K562 (cell line): ENCODE measurements at regions of chr4 and their contacts with region 1.

Region 1: DNA sequence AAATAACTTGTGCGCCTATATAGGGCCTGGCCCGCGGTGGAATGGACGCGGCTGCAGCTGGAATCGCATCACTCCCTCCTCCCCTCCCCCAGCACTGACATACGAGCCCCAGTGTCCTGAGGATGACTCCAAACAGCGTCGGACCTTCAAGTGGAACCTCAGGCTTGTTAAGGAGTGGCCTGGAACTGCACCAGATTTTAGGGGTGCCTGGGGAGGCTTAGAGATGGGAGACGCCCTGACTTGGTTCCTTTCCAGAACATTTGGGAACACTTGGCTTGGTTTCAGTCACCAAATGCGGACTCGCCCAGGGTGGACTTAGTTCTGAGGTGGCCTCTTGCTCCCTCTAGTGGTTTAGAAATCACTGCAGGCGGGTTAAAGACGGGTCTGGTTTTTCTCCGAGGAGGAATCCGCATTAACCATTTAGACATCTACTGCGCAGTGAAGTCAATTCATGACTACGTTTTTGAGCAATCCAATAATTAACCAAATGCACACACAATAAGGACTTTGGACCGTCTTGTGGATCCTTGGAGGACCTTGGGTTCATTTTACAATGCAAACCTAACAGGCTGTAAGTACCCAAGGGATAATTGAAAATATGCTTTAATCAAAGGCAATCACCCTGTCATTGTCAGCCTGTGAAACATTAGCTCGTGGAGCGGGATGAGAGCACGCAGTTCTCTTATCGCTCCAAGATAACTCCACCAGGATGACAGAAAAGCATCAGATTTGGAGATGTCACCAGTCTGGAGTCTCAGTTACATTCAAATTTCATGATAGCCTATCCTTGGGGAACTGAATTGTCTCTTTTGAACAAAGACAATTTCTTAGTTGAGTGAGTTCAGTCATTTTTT is 11.2 kb upstream of the PDGFRA start:
- DNase-seq: peak; percentile 73 to 80 (median 78)
- ATAC-seq: peak; percentile 98
- H3K4me3 ChIP-seq: no peak overlapping the region
- H3K27ac ChIP-seq: no peak overlapping the region
- H3K4me1 ChIP-seq: no peaks in the 10 kb centered on the region; a peak in 1 of 5 replicates
- H3K27me3 ChIP-seq: peaks cover 3 to 4% of the 10 kb centered on the region in 2 experiments; a peak in 3 of 5 replicates
- CTCF ChIP-seq: peak; percentile 79 to 89 (median 86)
- EP300 ChIP-seq: no peak
- POLR2A ChIP-seq: no peak
- RAD21 ChIP-seq: peak; percentile 84 to 87

Region 2: DNA sequence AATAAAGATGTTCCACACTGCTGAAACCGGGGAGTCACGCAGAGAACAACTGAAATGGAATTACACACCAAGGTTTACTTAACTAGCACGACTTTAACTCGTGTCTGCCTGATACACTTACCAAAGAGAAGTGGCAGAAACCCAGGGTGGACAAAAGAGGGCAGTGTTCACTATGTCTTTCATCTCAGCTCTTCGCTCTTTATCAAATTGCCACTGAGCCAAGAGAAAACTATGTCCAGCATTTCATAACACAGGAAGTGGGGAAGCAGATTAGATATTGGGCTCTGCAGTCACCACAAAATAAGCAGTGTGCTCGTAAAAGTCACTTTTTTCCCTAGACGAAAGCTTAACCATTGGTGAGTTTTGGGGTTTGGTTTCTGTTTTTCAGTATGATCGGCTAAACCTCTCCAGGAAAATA is 309.2 kb before region 1 on chr4:
- CTCF ChIA-PET with region 1: interaction called, 13 read pairs
- POLR2A ChIA-PET with region 1: interaction called, 4 read pairs
- in situ Hi-C with region 1: no loop called
- intact Hi-C with region 1: loop called (anchors 1 kb)
- DNase-seq: peak; percentile 16 to 67 (median 38)
- ATAC-seq: peak; percentile 94
- H3K4me3 ChIP-seq: no peak overlapping the region
- H3K27ac ChIP-seq: no peak overlapping the region
- H3K4me1 ChIP-seq: peaks cover 0 to 5% of the 10 kb centered on the region in 2 experiments; a peak in 1 of 5 replicates
- H3K27me3 ChIP-seq: peaks cover 2 to 10% of the 10 kb centered on the region in 2 experiments; a peak in 4 of 5 replicates
- CTCF ChIP-seq: peak; percentile 71 to 86 (median 81)
- EP300 ChIP-seq: peak; percentile 37; the same call in 1 of the 2 replicates
- POLR2A ChIP-seq: no peak
- RAD21 ChIP-seq: peak; percentile 86

Region 3: DNA sequence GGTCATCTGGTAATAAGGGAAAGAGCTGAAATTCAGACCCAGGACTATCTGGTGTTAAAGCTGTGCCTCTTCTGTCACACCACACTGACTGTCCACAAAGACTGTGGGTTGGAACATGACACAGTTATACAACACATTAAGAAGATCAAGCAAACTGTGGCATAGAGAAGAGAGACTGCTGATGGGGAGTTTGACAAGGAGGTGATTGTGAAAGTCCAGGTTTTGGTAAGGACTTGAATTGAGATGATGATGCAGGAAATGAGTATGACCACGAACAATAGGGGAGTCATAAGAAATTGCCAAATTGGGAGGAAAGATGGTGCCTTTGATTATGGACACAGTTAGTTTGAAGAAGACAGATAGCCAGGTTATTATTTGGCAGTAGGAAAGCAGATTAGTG is 174.6 kb after region 1 on chr4:
- CTCF ChIA-PET with region 1: no interaction called
- POLR2A ChIA-PET with region 1: no interaction called
- in situ Hi-C with region 1: no loop called
- intact Hi-C with region 1: no loop called
- DNase-seq: no peak
- ATAC-seq: no peak
- H3K4me3 ChIP-seq: no peak overlapping the region
- H3K27ac ChIP-seq: no peak overlapping the region
- H3K4me1 ChIP-seq: no peaks in the 10 kb centered on the region; a peak in 2 of 5 replicates
- H3K27me3 ChIP-seq: peaks cover 0 to 5% of the 10 kb centered on the region in 2 experiments; a peak in 1 of 5 replicates
- CTCF ChIP-seq: no peak
- EP300 ChIP-seq: no peak
- POLR2A ChIP-seq: no peak
- RAD21 ChIP-seq: no peak